Mammary epithelial cell (primary cell): ENCODE measurements at regions of chr3 and their contacts with region 1.

Region 1: GRCh38 chr3:185976977-185977678 is 39.3 kb upstream of the TRA2B start:
- DNase-seq: peak; percentile 36
- H3K4me3 ChIP-seq: no peak overlapping the region
- H3K27ac ChIP-seq: no peak overlapping the region
- H3K4me1 ChIP-seq: no peaks in the 10 kb centered on the region
- H3K27me3 ChIP-seq: no peaks in the 10 kb centered on the region
- CTCF ChIP-seq: peak; percentile 81 to 95

Region 2: DNA sequence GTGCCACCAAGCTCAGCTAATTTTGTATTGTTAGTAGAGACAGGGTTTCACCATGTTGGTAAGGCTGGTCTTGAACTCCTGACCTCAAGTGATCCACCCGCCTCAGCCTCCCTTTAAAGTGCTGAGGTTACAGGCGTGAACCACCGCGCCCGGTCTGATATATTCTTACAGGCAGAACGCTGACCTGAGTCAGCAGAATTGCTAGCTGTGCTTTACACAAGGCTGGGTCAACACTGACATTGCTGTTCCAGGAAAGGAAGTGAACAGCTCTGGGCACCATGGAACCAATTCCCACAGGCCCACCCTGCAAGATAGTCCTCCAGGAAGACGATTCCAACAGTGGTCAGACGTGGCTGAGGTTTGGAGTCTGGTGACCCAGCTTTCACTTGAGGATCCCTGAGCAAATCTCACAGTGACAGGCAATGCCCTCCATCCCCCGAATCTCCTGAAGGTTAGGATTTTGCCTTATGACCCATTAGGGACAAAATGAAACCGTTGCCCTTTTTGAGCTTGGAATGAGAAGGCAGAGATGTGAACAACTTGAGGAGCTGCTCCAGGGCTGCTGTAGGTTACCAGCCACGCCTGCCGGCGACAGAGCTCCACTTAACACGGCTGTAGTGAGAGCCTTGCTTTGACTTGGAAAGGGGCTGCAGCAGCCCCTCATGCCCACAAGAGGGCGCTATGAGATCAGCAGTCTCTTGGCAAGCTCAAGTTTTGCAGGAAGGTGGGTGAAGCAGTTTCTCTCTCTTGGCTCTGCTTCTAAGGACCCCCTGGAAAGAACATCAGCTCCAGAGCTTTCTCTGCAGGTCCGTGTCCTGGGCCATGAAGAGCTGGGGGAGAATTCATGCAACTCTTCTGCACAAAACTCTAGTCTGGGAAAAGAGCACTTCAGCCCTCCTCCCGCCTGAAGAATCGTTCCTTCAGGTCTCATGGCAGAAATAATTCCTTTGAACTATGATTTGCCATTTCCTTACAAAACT is 316.9 kb before region 1 on chr3:
- CTCF ChIA-PET with region 1: interaction called, 5 read pairs
- dilution Hi-C with region 1: no loop called
- in situ Hi-C with region 1: no loop called
- intact Hi-C with region 1: loop called (anchors 1 kb)
- DNase-seq: peak; percentile 62
- H3K4me3 ChIP-seq: no peak overlapping the region
- H3K27ac ChIP-seq: peak overlapping the region; percentile 48
- H3K4me1 ChIP-seq: peaks cover 60% of the 10 kb centered on the region
- H3K27me3 ChIP-seq: no peaks in the 10 kb centered on the region
- CTCF ChIP-seq: peak; percentile 98 to 99

Region 3: GRCh38 chr3:185942907-185943759 is 34.0 kb before region 1 on chr3:
- CTCF ChIA-PET with region 1: interaction called, 11 read pairs
- dilution Hi-C with region 1: no loop called
- in situ Hi-C with region 1: no loop called
- intact Hi-C with region 1: loop called (anchors 1 kb)
- DNase-seq: peak; percentile 81
- H3K4me3 ChIP-seq: no peak overlapping the region
- H3K27ac ChIP-seq: no peak overlapping the region
- H3K4me1 ChIP-seq: peaks cover 21% of the 10 kb centered on the region
- H3K27me3 ChIP-seq: peaks cover 2% of the 10 kb centered on the region
- CTCF ChIP-seq: peak; percentile 97 to 99

Region 4: GRCh38 chr3:186277268-186277909 is 300.3 kb after region 1 on chr3:
- CTCF ChIA-PET with region 1: no interaction called
- dilution Hi-C with region 1: loop called (anchors 25 kb)
- in situ Hi-C with region 1: loop called in 1 of 2 experiments (anchors 10 kb)
- intact Hi-C with region 1: loop called (anchors 1 kb)
- DNase-seq: peak; percentile 48
- H3K4me3 ChIP-seq: no peak overlapping the region
- H3K27ac ChIP-seq: no peak overlapping the region
- H3K4me1 ChIP-seq: no peaks in the 10 kb centered on the region
- H3K27me3 ChIP-seq: no peaks in the 10 kb centered on the region
- CTCF ChIP-seq: peak; percentile 54 to 67

Region 5: GRCh38 chr3:186806089-186807055 is 829.2 kb after region 1 on chr3 and contains the start of gene RFC4:
- CTCF ChIA-PET with region 1: no interaction called
- dilution Hi-C with region 1: loop called (anchors 25 kb)
- in situ Hi-C with region 1: loop called in 1 of 2 experiments (anchors 25 kb)
- intact Hi-C with region 1: no loop called
- DNase-seq: peak; percentile 74
- H3K4me3 ChIP-seq: peak within 1 kb of the TSS; percentile 65 to 87 (median 71)
- H3K27ac ChIP-seq: peak within 1 kb of the TSS; percentile 72
- H3K4me1 ChIP-seq: peaks cover 16% of the 10 kb centered on the region
- H3K27me3 ChIP-seq: no peaks in the 10 kb centered on the region
- CTCF ChIP-seq: no peak
- total RNA-seq, gene RFC4: 12.3 to 27.5 TPM